GM12878 (cell line): ENCODE measurements at regions of chr6 and their contacts with region 1.

Region 1: GRCh38 chr6:150417899-150418826 is 49.4 kb downstream of the IYD start:
- DNase-seq: peak; percentile 40
- ATAC-seq: peak; percentile 95
- H3K4me3 ChIP-seq: peak overlapping the region; percentile 57; the same call in 1 of the 2 replicates
- H3K27ac ChIP-seq: no peak overlapping the region
- H3K4me1 ChIP-seq: no peaks in the 10 kb centered on the region
- H3K27me3 ChIP-seq: no peaks in the 10 kb centered on the region; a peak in 1 of 4 replicates
- CTCF ChIP-seq: peak; percentile 77 to 88 (median 80)
- EP300 ChIP-seq: no peak
- POLR2A ChIP-seq: no peak
- RAD21 ChIP-seq: peak; percentile 90

Region 2: DNA sequence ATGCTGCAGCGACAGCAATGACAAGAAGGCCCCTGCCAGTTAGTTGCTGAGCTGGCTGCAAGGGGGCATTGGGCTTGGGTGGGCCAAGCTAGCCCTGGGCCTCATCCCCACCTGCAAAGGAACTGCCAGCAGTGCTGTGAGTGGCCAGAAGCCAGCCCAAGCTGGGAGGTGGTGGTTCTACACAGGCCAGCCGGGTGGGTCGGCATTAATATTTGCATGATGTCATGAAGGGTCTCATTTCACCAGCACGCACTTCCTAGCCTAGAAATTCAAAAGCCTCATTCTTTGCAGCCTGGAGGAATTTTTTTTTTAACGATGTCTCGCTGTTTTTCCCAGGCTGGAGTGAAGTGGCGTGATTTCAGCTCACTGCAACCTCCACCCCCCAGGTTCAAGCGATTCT is 12.7 kb after region 1 on chr6:
- CTCF ChIA-PET with region 1: interaction called, 10 read pairs
- POLR2A ChIA-PET with region 1: no interaction called
- RAD21 ChIA-PET with region 1: interaction called, 5 read pairs
- SMC1A ChIA-PET with region 1: interaction called, 3 read pairs
- in situ Hi-C with region 1: no loop called
- intact Hi-C with region 1: no loop called
- DNase-seq: no peak
- ATAC-seq: no peak
- H3K4me3 ChIP-seq: no peak overlapping the region
- H3K27ac ChIP-seq: no peak overlapping the region
- H3K4me1 ChIP-seq: no peaks in the 10 kb centered on the region
- H3K27me3 ChIP-seq: no peaks in the 10 kb centered on the region; a peak in 1 of 4 replicates
- CTCF ChIP-seq: no peak
- EP300 ChIP-seq: no peak
- POLR2A ChIP-seq: no peak
- RAD21 ChIP-seq: no peak

Region 3: DNA sequence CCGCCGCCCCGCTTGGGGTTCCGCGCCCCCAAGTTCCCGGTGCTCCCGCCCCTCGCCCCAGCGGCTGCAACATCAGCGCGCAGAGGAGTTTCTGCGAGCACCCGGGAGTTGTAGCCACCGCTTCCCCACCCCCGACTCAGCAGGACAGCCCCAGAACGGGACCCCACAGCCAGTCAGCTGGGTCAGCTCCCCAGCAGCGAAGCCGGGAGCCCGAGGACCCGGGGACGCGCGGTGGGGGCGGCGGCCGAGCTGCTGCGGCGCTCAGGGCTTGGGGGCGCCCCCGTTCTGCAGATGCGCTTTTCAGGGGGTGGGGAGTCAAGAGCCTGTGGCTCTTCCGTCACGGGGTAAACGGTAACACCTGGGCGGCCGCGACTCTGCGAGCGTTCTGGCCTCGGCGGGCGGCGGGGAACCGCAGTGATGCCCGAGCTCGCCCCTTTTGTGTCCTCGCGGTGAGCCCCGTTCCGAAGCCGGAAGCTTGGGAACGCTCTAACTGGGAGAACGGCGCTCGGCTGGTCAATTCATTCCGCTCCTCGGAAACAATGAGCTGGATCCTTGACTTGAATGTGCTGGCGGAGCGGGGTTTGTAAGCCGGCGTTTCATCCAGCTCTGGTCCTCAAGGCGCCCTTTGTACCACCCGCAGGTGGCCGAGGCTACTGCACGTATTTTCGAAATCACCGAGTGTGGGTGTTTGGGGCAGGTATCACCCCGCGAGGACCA is 182.3 kb after region 1 on chr6:
- CTCF ChIA-PET with region 1: interaction called, 22 read pairs
- POLR2A ChIA-PET with region 1: no interaction called
- RAD21 ChIA-PET with region 1: interaction called, 14 read pairs
- SMC1A ChIA-PET with region 1: interaction called, 13 read pairs
- in situ Hi-C with region 1: no loop called
- intact Hi-C with region 1: loop called (anchors 1 kb)
- DNase-seq: no peak
- ATAC-seq: peak; percentile 84
- H3K4me3 ChIP-seq: peak overlapping the region; percentile 75
- H3K27ac ChIP-seq: no peak overlapping the region
- H3K4me1 ChIP-seq: peaks cover 4% of the 10 kb centered on the region; the same call in 1 of the 2 replicates
- H3K27me3 ChIP-seq: peaks cover 2 to 7% of the 10 kb centered on the region in 2 experiments
- CTCF ChIP-seq: peak; percentile 23 to 54 (median 54)
- EP300 ChIP-seq: no peak
- POLR2A ChIP-seq: peak; percentile 43; the same call in 1 of the 2 replicates
- RAD21 ChIP-seq: peak; percentile 45

Region 4: GRCh38 chr6:150692604-150693003 is 274.4 kb after region 1 on chr6:
- CTCF ChIA-PET with region 1: interaction called, 21 read pairs
- POLR2A ChIA-PET with region 1: no interaction called
- RAD21 ChIA-PET with region 1: interaction called, 16 read pairs
- SMC1A ChIA-PET with region 1: interaction called, 9 read pairs
- in situ Hi-C with region 1: no loop called
- intact Hi-C with region 1: loop called (anchors 5 kb)
- DNase-seq: peak; percentile 38
- ATAC-seq: peak; percentile 89
- H3K4me3 ChIP-seq: no peak overlapping the region
- H3K27ac ChIP-seq: 0 out of 2 replicates have a peak overlapping the region, but pooled peaks have one; percentile 11
- H3K4me1 ChIP-seq: peaks cover 23% of the 10 kb centered on the region
- H3K27me3 ChIP-seq: no peaks in the 10 kb centered on the region; a peak in 1 of 4 replicates
- CTCF ChIP-seq: no peak
- EP300 ChIP-seq: peak; percentile 27 to 38; a peak in 1 of 4 replicates
- POLR2A ChIP-seq: no peak
- RAD21 ChIP-seq: no peak

Region 5: GRCh38 chr6:150741633-150742504 is 323.7 kb after region 1 on chr6:
- CTCF ChIA-PET with region 1: interaction called, 32 read pairs
- POLR2A ChIA-PET with region 1: no interaction called
- RAD21 ChIA-PET with region 1: interaction called, 19 read pairs
- SMC1A ChIA-PET with region 1: interaction called, 19 read pairs
- in situ Hi-C with region 1: loop called (anchors 5 kb)
- intact Hi-C with region 1: loop called (anchors 1 kb)
- DNase-seq: no peak
- ATAC-seq: peak; percentile 88
- H3K4me3 ChIP-seq: no peak overlapping the region
- H3K27ac ChIP-seq: no peak overlapping the region
- H3K4me1 ChIP-seq: no peaks in the 10 kb centered on the region
- H3K27me3 ChIP-seq: no peaks in the 10 kb centered on the region
- CTCF ChIP-seq: peak; percentile 52 to 61 (median 59); a peak in 5 of 6 replicates
- EP300 ChIP-seq: no peak
- POLR2A ChIP-seq: no peak
- RAD21 ChIP-seq: peak; percentile 85

Region 6: DNA sequence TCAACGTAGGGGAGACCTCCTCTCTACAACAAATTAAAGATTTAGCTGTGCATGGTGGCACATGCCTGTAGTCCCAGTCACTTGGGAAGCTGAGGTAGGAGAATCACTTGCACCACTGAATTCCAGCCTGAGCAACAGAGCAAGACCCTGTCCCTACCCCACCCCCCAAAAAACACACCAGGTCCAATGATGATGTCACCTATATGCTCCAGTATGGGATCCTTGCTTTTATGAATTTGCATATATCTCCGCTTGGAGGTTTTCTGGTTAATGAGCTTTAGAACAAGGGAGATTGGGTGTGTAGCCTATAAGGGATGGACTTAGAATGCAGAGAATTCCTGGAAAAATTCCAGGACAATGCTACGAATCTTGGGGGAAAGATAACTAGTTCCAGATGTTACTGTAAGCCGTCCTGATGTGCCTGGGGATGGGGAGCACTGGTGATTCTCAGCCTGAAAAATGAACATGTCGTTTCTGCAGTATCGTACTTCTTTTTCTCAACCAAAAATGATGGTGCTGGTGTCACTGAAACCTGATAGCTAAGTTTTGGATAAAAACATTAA is 912.1 kb after region 1 on chr6:
- CTCF ChIA-PET with region 1: interaction called, 7 read pairs
- POLR2A ChIA-PET with region 1: no interaction called
- RAD21 ChIA-PET with region 1: no interaction called
- SMC1A ChIA-PET with region 1: interaction called, 4 read pairs
- in situ Hi-C with region 1: no loop called
- intact Hi-C with region 1: loop called (anchors 10 kb)
- DNase-seq: no peak
- ATAC-seq: no peak
- H3K4me3 ChIP-seq: no peak overlapping the region
- H3K27ac ChIP-seq: no peak overlapping the region
- H3K4me1 ChIP-seq: no peaks in the 10 kb centered on the region
- H3K27me3 ChIP-seq: peaks cover 0 to 4% of the 10 kb centered on the region in 2 experiments; a peak in 2 of 4 replicates
- CTCF ChIP-seq: no peak
- EP300 ChIP-seq: no peak
- POLR2A ChIP-seq: no peak
- RAD21 ChIP-seq: no peak